ENCODE measurements at regions of chr6 and their contacts with region 1.

Region 1: DNA sequence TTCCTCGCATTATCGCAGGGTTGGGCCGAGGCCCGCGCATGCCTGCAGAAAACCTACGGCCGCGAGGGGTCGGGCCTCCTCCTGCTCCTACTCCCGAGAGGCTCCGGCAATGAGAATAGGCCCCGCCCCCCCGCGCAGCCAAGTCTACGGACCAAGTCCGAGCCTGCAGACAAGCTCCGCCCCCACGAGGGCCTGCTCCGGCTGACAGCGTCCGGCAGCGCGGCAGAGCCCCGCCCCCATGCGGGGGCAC is 3.1 kb upstream of the GPSM3 start:
- DNase-seq: peak; percentile 100
- ATAC-seq: peak; percentile 90
- H3K4me3 Mint-ChIP-seq: peak overlapping the region; percentile 94
- H3K27ac Mint-ChIP-seq: peak overlapping the region; percentile 90
- H3K4me1 Mint-ChIP-seq: peaks cover 32% of the 10 kb centered on the region
- H3K27me3 Mint-ChIP-seq: no peaks in the 10 kb centered on the region

Region 2: GRCh38 chr6:31827286-31828079 is 368.1 kb before region 1 on chr6 and contains the start of gene HSPA1B:
- CTCF ChIA-PET with region 1: no interaction called
- POLR2A ChIA-PET with region 1: no interaction called
- intact Hi-C with region 1: loop called in 1 of 2 experiments (anchors 2 kb)
- DNase-seq: peak; percentile 97
- ATAC-seq: peak; percentile 83
- H3K4me3 Mint-ChIP-seq: peak within 1 kb of the TSS; percentile 77
- H3K27ac Mint-ChIP-seq: peak within 1 kb of the TSS; percentile 92
- H3K4me1 Mint-ChIP-seq: peaks cover 43% of the 10 kb centered on the region
- H3K27me3 Mint-ChIP-seq: no peaks in the 10 kb centered on the region
- total RNA-seq, gene HSPA1B: 54.6 to 61.1 TPM

Region 3: DNA sequence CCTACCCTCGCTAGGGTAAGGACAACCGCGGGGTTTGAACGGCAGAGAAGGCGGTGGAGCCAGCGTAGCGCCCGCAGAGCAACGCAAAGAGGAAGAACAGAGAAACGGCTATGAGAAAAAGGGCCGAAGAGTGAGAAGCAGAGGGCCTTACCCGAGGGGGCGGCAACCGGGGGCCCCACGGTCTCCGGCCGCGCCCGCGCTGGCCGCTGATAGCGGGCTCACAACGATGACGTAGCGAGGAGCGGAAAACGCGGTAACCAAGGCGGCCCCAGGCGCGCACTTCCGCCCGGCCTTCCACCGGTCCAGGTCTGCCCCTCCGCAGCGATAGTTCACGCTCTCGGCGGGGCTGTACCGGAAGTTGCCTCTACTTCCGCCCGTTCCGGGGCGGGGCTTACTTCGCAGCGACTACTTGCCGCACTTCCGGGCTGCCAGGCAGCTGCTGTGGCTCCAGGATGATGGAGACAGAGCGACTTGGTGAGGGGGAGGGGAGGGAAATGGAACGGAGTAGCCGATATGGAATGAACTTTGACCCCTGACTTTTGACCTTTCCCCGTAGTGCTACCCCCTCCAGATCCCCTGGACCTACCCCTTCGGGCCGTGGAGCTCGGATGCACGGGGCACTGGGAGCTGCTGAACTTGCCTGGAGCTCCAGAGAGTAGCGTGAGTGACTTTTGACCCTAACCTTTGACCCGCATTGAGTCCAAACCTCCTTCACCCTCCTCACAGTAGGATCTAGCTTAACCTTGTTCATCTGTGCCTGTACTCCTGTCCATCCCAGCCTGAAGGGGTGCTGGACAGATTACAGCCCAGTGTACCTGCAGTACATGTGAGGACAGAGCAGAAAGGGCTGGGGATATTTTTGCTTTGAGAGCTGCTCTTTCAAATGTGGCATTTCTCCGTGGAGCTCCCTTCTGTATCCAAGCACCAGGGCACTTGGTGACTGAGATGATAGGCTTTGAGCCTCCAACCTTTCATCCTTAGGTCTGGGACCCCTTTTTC is 236.5 kb before region 1 on chr6 and contains the starts of genes NELFE and SKIC2:
- CTCF ChIA-PET with region 1: interaction called, 3 read pairs
- POLR2A ChIA-PET with region 1: no interaction called
- intact Hi-C with region 1: loop called in 1 of 2 experiments (anchors 1 kb)
- DNase-seq: peak; percentile 99
- ATAC-seq: peak; percentile 99
- H3K4me3 Mint-ChIP-seq: peak within 1 kb of the TSS; percentile 95
- H3K27ac Mint-ChIP-seq: peak within 1 kb of the TSS; percentile 98
- H3K4me1 Mint-ChIP-seq: peaks cover 34% of the 10 kb centered on the region
- H3K27me3 Mint-ChIP-seq: no peaks in the 10 kb centered on the region
- total RNA-seq, gene NELFE: 74.3 to 95.1 TPM
- total RNA-seq, gene SKIC2: 90.2 to 104 TPM

Region 4: DNA sequence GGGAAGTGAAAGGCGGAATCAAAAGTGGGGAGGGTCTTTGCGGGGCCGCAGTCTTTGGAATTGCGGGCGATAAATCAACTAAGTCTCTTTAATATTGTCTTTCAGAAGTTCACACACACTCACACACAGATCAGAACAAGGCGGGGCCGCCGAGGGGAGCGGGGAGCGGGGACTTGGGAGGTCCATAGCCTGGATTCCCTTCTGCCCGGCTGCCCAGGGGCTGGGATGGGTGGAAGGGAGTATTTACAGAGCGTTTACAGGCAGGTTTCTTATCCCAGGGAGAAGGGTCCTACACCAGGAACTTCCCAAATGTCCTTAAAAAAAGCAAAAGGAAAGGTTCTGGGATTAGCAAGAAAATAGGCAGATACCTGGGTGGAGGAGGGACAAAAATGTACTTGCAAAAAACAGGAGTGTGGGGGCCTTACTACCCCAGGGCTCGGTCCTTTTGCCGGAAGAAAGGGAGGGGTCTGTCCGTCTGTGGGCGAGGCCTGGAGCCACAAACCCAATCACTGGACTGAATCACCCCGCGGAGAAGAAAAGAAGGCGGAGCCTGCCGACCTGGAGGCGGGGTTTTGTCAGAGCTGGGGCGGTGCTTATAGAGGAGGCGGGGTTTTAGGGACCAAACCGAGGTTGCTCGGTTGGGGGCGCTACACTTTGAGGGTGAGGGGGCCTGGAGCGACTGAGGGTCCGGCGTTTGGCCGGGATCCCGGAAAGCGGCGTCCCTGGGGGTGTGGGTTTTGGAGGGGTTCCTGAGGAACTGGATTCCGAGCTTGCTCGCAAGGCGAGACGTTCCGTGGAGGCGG is 47.1 kb before region 1 on chr6:
- CTCF ChIA-PET with region 1: interaction called, 6 read pairs
- POLR2A ChIA-PET with region 1: no interaction called
- intact Hi-C with region 1: loop called in 1 of 2 experiments (anchors 1 kb)
- DNase-seq: peak; percentile 88
- ATAC-seq: peak; percentile 88
- H3K4me3 Mint-ChIP-seq: peak overlapping the region; percentile 67
- H3K27ac Mint-ChIP-seq: peak overlapping the region; percentile 0
- H3K4me1 Mint-ChIP-seq: peaks cover 42% of the 10 kb centered on the region
- H3K27me3 Mint-ChIP-seq: peaks cover 19% of the 10 kb centered on the region

Region 5: DNA sequence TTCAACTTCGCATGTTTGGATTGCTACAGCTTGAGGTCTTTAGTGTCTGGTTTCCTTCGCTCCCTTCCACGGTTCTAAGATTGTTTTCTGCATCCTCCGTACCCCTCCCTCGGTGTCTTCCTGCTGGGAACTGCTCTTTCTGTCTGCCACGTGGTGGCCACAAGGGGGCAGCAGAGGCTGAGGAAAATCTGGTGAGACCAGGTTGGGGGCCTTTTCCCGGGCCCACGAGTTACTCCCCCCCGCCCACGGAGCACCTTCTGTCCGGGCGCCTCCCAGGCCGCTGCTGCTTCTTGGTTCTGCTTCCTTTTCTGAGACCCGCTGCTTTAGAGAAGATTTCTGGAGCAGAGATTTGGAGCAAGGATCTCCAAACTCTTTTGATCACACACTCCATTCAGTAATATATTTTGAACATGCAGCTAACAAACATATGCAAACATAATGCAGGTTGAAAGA is 49.4 kb after region 1 on chr6:
- CTCF ChIA-PET with region 1: interaction called, 4 read pairs
- POLR2A ChIA-PET with region 1: no interaction called
- intact Hi-C with region 1: loop called in 1 of 2 experiments (anchors 2 kb)
- DNase-seq: peak; percentile 81
- ATAC-seq: peak; percentile 68
- H3K4me3 Mint-ChIP-seq: peak overlapping the region; percentile 6
- H3K27ac Mint-ChIP-seq: no peak overlapping the region
- H3K4me1 Mint-ChIP-seq: peaks cover 27% of the 10 kb centered on the region
- H3K27me3 Mint-ChIP-seq: no peaks in the 10 kb centered on the region

Region 6: DNA sequence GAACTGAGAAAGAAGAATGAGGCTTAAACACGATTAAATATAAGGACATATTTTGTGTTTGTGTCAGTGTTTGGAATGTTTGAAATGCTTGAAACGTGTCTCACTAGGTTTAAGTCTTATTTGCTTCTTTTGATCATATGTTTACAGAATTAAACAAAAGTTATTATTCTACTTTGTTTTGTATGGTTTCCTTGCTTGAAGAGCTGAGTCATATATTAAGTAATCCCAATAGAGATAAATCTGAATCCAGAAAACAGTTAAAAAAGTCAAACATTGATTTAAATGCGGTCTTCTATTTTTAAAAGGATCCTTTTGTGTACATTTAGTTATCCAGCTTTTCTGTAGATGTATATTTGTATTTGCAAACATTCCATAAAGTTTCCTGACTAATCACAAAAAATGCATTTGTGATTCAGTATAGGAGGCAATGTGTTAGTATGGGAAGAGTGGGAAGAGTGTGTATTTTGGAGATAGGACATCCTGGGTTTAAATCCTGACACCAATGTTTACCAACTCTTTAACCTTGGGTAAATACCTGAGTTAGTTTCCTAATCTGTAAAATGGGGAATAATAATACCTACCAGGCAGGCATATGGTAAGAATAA is 103.2 kb after region 1 on chr6:
- CTCF ChIA-PET with region 1: no interaction called
- POLR2A ChIA-PET with region 1: no interaction called
- intact Hi-C with region 1: no loop called
- DNase-seq: no peak
- ATAC-seq: no peak
- H3K4me3 Mint-ChIP-seq: no peak overlapping the region
- H3K27ac Mint-ChIP-seq: no peak overlapping the region
- H3K4me1 Mint-ChIP-seq: peaks cover under 1% of the 10 kb centered on the region
- H3K27me3 Mint-ChIP-seq: peaks cover 10% of the 10 kb centered on the region

Region 7: DNA sequence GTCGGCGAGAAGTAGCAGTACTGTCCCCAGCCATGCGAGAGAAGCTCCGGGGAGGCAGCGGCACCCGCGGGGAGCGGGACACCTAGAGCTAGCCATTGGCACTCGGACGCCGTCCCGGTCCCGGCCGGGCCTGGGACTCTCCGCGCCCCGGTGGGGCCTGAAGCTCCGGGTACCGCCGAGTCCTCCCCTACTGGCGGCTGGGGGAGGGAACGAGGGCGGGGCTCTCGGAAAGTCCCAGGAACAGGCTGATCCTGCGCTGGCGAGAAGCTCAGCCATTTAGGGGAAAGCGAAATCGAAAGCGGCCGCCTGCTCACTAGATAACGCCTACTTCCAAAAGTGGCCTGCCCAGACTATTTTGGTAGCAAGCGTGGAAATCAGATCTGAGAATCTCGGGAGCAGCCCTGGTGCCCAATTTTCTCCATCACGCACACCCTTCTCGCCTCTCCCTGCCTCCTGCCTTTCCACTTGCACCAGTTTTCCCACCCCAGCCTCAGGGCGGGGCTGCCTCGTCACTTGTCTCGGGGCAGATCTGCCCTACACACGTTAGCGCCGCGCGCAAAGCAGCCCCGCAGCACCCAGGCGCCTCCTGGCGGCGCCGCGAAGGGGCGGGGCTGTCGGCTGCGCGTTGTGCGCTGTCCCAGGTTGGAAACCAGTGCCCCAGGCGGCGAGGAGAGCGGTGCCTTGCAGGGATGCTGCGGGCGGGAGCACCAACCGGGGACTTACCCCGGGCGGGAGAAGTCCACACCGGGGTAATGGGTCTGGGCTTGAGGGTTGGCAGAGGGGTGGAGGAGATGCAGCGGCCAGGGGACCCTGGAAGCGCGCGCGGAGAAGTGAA is 658.2 kb after region 1 on chr6 and contains the starts of genes PSMB9 and TAP1:
- CTCF ChIA-PET with region 1: no interaction called
- POLR2A ChIA-PET with region 1: no interaction called
- intact Hi-C with region 1: loop called in 1 of 2 experiments (anchors 5 kb)
- DNase-seq: peak; percentile 98
- ATAC-seq: peak; percentile 84
- H3K4me3 Mint-ChIP-seq: peak within 1 kb of the TSS; percentile 100
- H3K27ac Mint-ChIP-seq: peak within 1 kb of the TSS; percentile 99
- H3K4me1 Mint-ChIP-seq: peaks cover 62% of the 10 kb centered on the region
- H3K27me3 Mint-ChIP-seq: no peaks in the 10 kb centered on the region
- total RNA-seq, gene PSMB9: 210 to 282 TPM
- total RNA-seq, gene TAP1: 191 to 255 TPM